Activated CD8-positive, alpha-beta T cell treated with anti-CD3 and anti-CD28 coated beads, Interleukin-2, amount 10 ng/mL, durations not matched to agents 7 days and 5 days (primary cell): ENCODE measurements at regions of chr11 and their contacts with region 1.

Region 1: GRCh38 chr11:7513234-7514098 is at the start of gene PPFIBP2:
- DNase-seq: peak; percentile 83
- ATAC-seq: peak; percentile 94
- H3K4me3 Mint-ChIP-seq: peak within 1 kb of the TSS; percentile 84
- H3K27ac Mint-ChIP-seq: peak within 1 kb of the TSS; percentile 80
- H3K4me1 Mint-ChIP-seq: peaks cover 46% of the 10 kb centered on the region
- H3K27me3 Mint-ChIP-seq: peaks cover 19% of the 10 kb centered on the region
- total RNA-seq, gene PPFIBP2: 11.2 to 12.1 TPM

Region 2: GRCh38 chr11:7536100-7536499 is 22.6 kb after region 1 on chr11:
- CTCF ChIA-PET with region 1: interaction called, 19 read pairs
- POLR2A ChIA-PET with region 1: no interaction called
- DNase-seq: no peak
- ATAC-seq: no peak
- H3K4me3 Mint-ChIP-seq: no peak overlapping the region
- H3K27ac Mint-ChIP-seq: peak overlapping the region; percentile 44
- H3K4me1 Mint-ChIP-seq: peaks cover 61% of the 10 kb centered on the region
- H3K27me3 Mint-ChIP-seq: peaks cover 16% of the 10 kb centered on the region

Region 3: GRCh38 chr11:7657306-7658025 is 144.0 kb after region 1 on chr11:
- CTCF ChIA-PET with region 1: interaction called, 18 read pairs
- POLR2A ChIA-PET with region 1: no interaction called
- DNase-seq: peak; percentile 39
- ATAC-seq: peak; percentile 57
- H3K4me3 Mint-ChIP-seq: no peak overlapping the region
- H3K27ac Mint-ChIP-seq: no peak overlapping the region
- H3K4me1 Mint-ChIP-seq: no peaks in the 10 kb centered on the region
- H3K27me3 Mint-ChIP-seq: no peaks in the 10 kb centered on the region

Region 4: GRCh38 chr11:7665473-7666291 is 152.2 kb after region 1 on chr11:
- CTCF ChIA-PET with region 1: interaction called, 27 read pairs
- POLR2A ChIA-PET with region 1: interaction called, 3 read pairs
- DNase-seq: peak; percentile 72
- ATAC-seq: peak; percentile 95
- H3K4me3 Mint-ChIP-seq: no peak overlapping the region
- H3K27ac Mint-ChIP-seq: no peak overlapping the region
- H3K4me1 Mint-ChIP-seq: no peaks in the 10 kb centered on the region
- H3K27me3 Mint-ChIP-seq: no peaks in the 10 kb centered on the region